Mammary epithelial cell (primary cell): ENCODE measurements at regions of chr11 and their contacts with region 1.

Region 1: DNA sequence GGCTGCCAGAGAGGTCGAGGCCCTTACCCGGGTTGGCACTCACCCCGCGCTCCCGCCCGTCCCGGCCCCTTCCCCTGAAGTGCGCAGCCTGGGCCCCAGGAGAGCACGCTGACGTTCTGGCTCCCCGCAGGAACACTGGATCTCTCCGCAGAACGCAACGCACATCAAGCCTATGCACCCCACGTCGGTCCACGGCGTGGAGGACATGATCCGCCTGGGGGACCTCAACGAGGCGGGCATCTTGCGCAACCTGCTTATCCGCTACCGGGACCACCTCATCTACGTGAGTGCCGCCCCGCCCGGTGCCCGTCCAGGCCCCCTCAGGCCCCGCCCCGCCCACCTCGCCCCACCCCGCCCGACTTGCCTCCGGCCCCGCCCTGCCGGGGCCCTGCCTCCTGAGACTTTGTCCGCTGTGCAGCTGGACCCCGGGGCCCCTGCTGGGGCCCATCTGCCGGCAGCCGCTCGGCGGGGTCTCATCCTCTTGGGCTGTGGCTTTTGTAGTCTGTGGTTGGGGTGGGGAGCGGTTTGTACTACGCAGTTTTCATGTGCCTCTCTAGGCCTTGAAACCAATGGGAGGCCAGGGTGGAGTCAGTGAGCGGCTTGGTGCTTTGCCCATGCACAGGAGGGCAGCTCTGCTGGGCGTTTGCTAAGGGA is 19.7 kb downstream of the MYO7A start:
- DNase-seq: no peak
- H3K4me3 ChIP-seq: no peak overlapping the region
- H3K27ac ChIP-seq: no peak overlapping the region
- H3K4me1 ChIP-seq: peaks cover 7% of the 10 kb centered on the region
- H3K27me3 ChIP-seq: peaks cover 13% of the 10 kb centered on the region
- CTCF ChIP-seq: no peak

Region 2: DNA sequence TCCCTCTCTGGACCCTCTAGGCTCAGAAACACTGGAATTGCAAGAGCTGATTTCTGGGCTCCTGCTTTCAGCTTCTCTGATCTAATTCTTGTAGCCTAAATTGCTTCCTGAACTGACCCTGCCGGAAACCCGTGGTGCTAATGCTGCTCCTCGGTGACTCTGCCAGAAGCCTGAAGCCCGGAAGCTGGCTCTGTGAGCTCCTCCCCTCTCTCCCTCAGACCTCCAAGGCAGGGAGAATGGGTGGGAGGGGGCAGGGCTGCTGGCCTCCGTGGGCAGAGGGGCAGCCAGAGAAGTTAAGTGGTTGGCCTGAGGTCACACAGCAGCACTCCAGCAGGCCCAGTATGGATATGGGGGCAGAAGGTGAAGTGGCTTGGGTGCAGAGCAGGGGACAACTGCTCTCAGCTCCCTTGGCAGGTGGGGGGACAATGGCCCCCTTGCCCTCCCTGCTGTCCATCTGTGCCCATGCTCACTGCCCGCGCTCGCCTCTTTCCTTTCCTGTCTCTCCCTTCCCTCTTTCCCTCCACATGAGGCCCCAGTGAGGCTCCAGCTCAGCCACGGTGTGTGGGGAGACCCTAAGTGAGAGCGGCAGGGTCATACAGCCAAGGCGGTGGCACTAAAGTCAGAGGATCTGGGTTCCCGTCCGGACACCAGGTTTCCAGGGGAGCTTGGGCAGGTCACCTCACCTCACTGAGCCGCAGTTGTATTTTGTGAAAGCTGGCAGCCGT is 64.8 kb before region 1 on chr11:
- CTCF ChIA-PET with region 1: no interaction called
- dilution Hi-C with region 1: loop called (anchors 10 kb)
- in situ Hi-C with region 1: no loop called
- intact Hi-C with region 1: no loop called
- DNase-seq: no peak
- H3K4me3 ChIP-seq: no peak overlapping the region
- H3K27ac ChIP-seq: no peak overlapping the region
- H3K4me1 ChIP-seq: no peaks in the 10 kb centered on the region
- H3K27me3 ChIP-seq: peaks cover 1% of the 10 kb centered on the region
- CTCF ChIP-seq: no peak